ENCODE measurements at regions of chr19 and their contacts with region 1.

Region 1: GRCh38 chr19:8367327-8368001 is 3.5 kb downstream of the ANGPTL4 start:
- H3K4me3 ChIP-seq: peak overlapping the region; percentile 28
- H3K27ac ChIP-seq: no peak overlapping the region
- H3K4me1 ChIP-seq: peaks cover 20% of the 10 kb centered on the region
- CTCF ChIP-seq: no peak

Region 2: DNA sequence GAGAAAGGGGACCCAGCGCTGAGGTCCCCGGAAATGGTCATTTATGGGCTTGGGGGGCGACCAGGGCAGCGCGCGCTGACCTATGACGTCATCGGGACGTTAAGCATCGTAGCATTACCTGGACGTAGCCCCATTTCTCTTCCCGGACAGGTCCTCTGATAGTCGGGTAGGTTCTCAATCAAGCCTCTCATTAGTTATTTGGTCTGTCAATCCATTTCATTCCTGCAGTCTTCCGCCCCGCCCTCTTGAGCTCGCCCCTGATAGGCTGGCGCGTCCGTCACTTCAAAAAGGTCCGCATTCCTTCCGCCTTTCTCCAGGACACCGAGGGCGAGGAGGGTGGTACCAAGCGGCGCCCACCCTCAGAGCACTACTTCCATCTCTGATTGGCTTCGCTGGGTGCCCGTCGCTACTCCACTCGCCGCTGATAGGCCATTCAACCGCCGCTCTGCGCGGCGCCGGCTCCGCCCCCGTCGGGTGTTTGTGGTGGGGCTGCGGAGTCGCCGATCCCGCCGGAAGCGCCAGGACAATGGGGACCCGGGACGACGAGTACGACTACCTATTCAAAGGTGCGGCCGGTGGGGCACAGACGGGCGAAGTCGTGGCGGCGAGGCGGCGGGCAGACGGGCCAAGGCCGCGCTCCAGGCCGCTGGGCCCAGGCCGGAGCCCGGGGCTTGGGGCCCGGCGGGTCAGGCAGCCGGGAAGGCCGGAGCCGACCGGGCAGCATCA is 22.6 kb after region 1 on chr19 and contains the start of gene RAB11B:
- CTCF ChIA-PET with region 1: interaction called, 3 read pairs
- POLR2A ChIA-PET with region 1: interaction called, 10 read pairs
- H3K4me3 ChIP-seq: peak within 1 kb of the TSS; percentile 97
- H3K27ac ChIP-seq: peak within 1 kb of the TSS; percentile 98
- H3K4me1 ChIP-seq: peaks cover 3% of the 10 kb centered on the region; the same call in 1 of the 2 replicates
- CTCF ChIP-seq: no peak